ENCODE measurements at regions of chr2 and their contacts with region 1.

Region 1: GRCh38 chr2:62456721-62457539 is 49.1 kb downstream of the TMEM17 start:
- DNase-seq: peak; percentile 15
- H3K4me3 ChIP-seq: peak overlapping the region; percentile 50 to 74 (median 56)
- H3K27ac ChIP-seq: peak overlapping the region; percentile 87 to 92 (median 90)
- H3K4me1 ChIP-seq: peaks cover 10 to 78% (median 47%) of the 10 kb centered on the region in 3 donors
- H3K27me3 ChIP-seq: no peaks in the 10 kb centered on the region
- CTCF ChIP-seq: peak; percentile 85 to 99 (median 97)
- POLR2A ChIP-seq: no peak

Region 2: DNA sequence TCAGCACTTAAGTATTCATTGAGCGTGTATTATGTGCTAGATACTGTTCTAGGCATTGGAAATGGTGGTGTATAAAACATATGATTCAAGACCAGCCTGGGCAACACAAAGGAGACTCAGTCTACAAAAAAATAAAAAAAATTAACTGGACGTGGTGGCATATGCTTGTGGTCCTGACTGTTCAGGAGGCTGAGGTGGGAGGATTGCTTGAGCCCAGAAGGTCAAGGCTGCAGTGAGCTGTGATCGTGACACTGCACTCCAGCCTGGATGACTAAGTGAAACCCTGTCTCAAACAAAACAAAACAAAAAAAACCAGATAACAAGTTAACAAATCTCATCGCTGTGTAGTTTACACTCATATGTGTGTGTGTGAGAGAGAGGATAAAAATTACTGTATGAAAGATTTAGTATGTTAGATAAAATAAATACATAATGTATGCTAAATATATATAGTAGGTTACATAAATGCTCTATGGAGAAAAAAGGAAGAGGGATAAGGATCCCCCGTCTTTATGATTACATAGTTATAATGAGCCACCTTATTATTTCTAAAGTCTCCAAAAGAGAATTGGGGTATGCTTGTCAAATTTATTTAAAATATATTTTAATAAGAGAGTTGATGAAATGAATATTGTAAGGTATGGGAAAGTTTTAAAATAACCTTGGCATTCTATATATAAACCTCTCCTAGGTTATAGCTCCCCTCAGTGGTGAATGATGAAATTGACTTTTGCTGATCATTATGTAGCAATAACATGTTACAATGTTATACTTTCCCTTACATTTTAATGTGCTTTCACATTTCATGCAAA is 317.8 kb after region 1 on chr2:
- intact Hi-C with region 1: loop called (anchors 5 kb)
- DNase-seq: no peak
- H3K4me3 ChIP-seq: no peak overlapping the region
- H3K27ac ChIP-seq: peak overlapping the region in 3 of 4 donors; percentile 26 to 61 (median 45)
- H3K4me1 ChIP-seq: peaks cover 0 to 32% (median 7%) of the 10 kb centered on the region in 3 donors
- H3K27me3 ChIP-seq: no peaks in the 10 kb centered on the region
- CTCF ChIP-seq: peak; percentile 57 to 88 (median 77)
- POLR2A ChIP-seq: no peak

Region 3: GRCh38 chr2:63712748-63713147 is 1255.8 kb after region 1 on chr2:
- intact Hi-C with region 1: no loop called
- DNase-seq: no peak
- H3K4me3 ChIP-seq: no peak overlapping the region
- H3K27ac ChIP-seq: peak overlapping the region in 1 of 4 donors; percentile 33
- H3K4me1 ChIP-seq: peaks cover 0 to 10% (median 0%) of the 10 kb centered on the region in 3 donors
- H3K27me3 ChIP-seq: no peaks in the 10 kb centered on the region
- CTCF ChIP-seq: no peak
- POLR2A ChIP-seq: no peak

Measured in esophagus squamous epithelium (tissue), 5 donors.